ENCODE measurements at regions of chr12 and their contacts with region 1.

Region 1: GRCh38 chr12:98754095-98754494 is 109.0 kb downstream of the APAF1 start:
- DNase-seq: peak; percentile 21
- H3K4me3 ChIP-seq: no peak overlapping the region
- H3K27ac ChIP-seq: no peak overlapping the region
- H3K4me1 ChIP-seq: no peaks in the 10 kb centered on the region
- H3K27me3 ChIP-seq: no peaks in the 10 kb centered on the region
- CTCF ChIP-seq: no peak

Region 2: GRCh38 chr12:98788396-98788795 is 34.3 kb after region 1 on chr12:
- CTCF ChIA-PET with region 1: no interaction called
- dilution Hi-C with region 1: loop called (anchors 5 kb)
- in situ Hi-C with region 1: no loop called
- intact Hi-C with region 1: no loop called
- DNase-seq: no peak
- H3K4me3 ChIP-seq: no peak overlapping the region
- H3K27ac ChIP-seq: no peak overlapping the region
- H3K4me1 ChIP-seq: no peaks in the 10 kb centered on the region
- H3K27me3 ChIP-seq: no peaks in the 10 kb centered on the region
- CTCF ChIP-seq: no peak

Region 3: DNA sequence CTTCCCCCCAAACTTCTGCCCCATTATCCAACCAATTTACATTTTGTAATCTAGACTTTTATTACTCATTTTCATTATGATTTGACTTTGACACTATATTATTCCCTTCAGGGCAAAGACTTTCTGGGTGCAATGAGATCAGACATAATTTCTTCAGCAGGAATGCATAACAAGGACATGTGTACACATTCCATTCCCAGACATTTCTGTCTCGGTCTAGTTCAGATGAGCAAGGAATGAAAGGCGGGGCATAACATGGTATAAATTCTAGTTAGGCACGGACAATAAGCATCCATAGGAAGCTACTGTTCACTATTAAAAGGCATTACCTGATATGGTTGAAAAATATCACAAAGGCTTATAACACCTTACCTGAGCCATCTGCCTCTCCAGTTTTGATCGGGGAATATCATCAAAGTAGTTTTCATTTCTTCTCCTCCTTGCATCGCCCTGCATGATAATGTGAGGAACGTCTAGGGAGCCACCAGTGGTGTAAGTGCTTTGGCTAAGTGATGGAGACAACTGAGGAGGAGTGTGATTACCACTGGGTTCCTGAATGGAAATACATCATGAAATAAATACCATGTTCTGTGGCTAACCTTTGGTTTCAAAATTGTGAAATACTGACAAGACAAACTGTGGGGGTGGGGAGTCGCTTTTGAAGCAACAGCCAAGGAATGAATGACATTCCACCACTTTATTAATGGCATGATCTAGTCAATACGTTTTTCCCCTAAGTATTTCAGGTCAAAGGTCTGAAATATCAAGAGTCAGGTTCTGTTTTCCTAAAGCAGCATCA is 74.9 kb after region 1 on chr12:
- CTCF ChIA-PET with region 1: no interaction called
- dilution Hi-C with region 1: loop called (anchors 5 kb)
- in situ Hi-C with region 1: no loop called
- intact Hi-C with region 1: no loop called
- DNase-seq: no peak
- H3K4me3 ChIP-seq: no peak overlapping the region
- H3K27ac ChIP-seq: no peak overlapping the region
- H3K4me1 ChIP-seq: no peaks in the 10 kb centered on the region
- H3K27me3 ChIP-seq: no peaks in the 10 kb centered on the region
- CTCF ChIP-seq: no peak

Region 4: GRCh38 chr12:99997806-99998205 is 1243.7 kb after region 1 on chr12:
- CTCF ChIA-PET with region 1: no interaction called
- dilution Hi-C with region 1: no loop called
- in situ Hi-C with region 1: no loop called
- intact Hi-C with region 1: no loop called
- DNase-seq: no peak
- H3K4me3 ChIP-seq: no peak overlapping the region
- H3K27ac ChIP-seq: no peak overlapping the region
- H3K4me1 ChIP-seq: no peaks in the 10 kb centered on the region
- H3K27me3 ChIP-seq: no peaks in the 10 kb centered on the region
- CTCF ChIP-seq: no peak

Measured in mammary epithelial cell (primary cell).